Endothelial cell of umbilical vein (primary cell): ENCODE measurements at regions of chr1 and their contacts with region 1.

Region 1: GRCh38 chr1:7379445-7379971 is 391.6 kb upstream of the VAMP3 start:
- DNase-seq: peak; percentile 94
- H3K4me3 ChIP-seq: peak overlapping the region in 1 of 3 experiments; percentile 2
- H3K27ac ChIP-seq: peak overlapping the region; percentile 75
- H3K4me1 ChIP-seq: peaks cover 23% of the 10 kb centered on the region
- H3K27me3 ChIP-seq: no peaks in the 10 kb centered on the region
- CTCF ChIP-seq: no peak
- POLR2A ChIP-seq: peak; percentile 54

Region 2: GRCh38 chr1:7299329-7299799 is 80.1 kb before region 1 on chr1:
- CTCF ChIA-PET with region 1: interaction called, 3 read pairs
- POLR2A ChIA-PET with region 1: no interaction called
- dilution Hi-C with region 1: no loop called
- intact Hi-C with region 1: loop called (anchors 2 kb)
- DNase-seq: peak; percentile 93
- H3K4me3 ChIP-seq: no peak overlapping the region
- H3K27ac ChIP-seq: peak overlapping the region; percentile 90
- H3K4me1 ChIP-seq: peaks cover 17% of the 10 kb centered on the region
- H3K27me3 ChIP-seq: no peaks in the 10 kb centered on the region
- CTCF ChIP-seq: no peak
- POLR2A ChIP-seq: no peak

Region 3: DNA sequence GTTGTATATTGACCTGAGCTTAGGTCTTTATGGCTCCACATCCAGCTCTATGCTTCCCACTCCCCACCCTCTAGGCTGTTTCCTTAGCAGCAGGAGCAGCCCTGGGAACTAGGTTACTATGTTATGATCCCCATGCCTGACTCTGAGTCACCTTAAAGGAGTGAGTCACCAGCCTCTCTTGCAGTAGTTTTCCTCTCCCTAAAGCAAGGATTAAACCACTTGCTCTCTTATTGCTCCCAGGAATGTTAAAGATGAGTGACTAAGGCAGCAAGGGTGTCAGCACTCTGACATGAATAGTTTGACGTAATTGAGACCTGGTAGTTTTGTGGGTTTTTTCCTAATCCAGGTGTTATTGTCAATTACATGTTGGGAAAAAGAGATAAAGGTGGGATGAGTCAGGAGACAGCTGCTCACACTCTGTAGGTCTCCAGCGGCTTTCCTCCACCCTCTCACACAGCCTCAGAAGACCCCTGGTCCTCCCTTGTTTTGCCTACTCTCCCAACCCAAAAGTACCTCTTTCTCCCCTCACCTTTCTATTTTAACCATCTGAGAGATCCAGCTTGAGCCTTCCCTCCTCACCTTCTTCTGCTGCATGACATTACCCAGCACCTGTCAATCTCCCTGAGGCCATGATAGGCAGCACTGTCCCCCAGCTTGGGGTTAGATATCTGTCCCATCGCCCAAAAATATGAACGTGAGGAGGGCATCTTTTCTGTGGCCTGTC is 22.5 kb after region 1 on chr1:
- CTCF ChIA-PET with region 1: interaction called, 4 read pairs
- POLR2A ChIA-PET with region 1: no interaction called
- dilution Hi-C with region 1: no loop called
- intact Hi-C with region 1: loop called (anchors 1 kb)
- DNase-seq: peak; percentile 94
- H3K4me3 ChIP-seq: no peak overlapping the region
- H3K27ac ChIP-seq: peak overlapping the region; percentile 32
- H3K4me1 ChIP-seq: peaks cover 9% of the 10 kb centered on the region
- H3K27me3 ChIP-seq: peaks cover 6 to 8% of the 10 kb centered on the region in 2 experiments
- CTCF ChIP-seq: no peak
- POLR2A ChIP-seq: no peak

Region 4: GRCh38 chr1:7470880-7471638 is 91.6 kb after region 1 on chr1:
- CTCF ChIA-PET with region 1: no interaction called
- POLR2A ChIA-PET with region 1: no interaction called
- dilution Hi-C with region 1: no loop called
- intact Hi-C with region 1: loop called (anchors 1 kb)
- DNase-seq: peak; percentile 90
- H3K4me3 ChIP-seq: no peak overlapping the region
- H3K27ac ChIP-seq: peak overlapping the region; percentile 53
- H3K4me1 ChIP-seq: peaks cover 14% of the 10 kb centered on the region
- H3K27me3 ChIP-seq: no peaks in the 10 kb centered on the region
- CTCF ChIP-seq: no peak
- POLR2A ChIP-seq: no peak

Region 5: DNA sequence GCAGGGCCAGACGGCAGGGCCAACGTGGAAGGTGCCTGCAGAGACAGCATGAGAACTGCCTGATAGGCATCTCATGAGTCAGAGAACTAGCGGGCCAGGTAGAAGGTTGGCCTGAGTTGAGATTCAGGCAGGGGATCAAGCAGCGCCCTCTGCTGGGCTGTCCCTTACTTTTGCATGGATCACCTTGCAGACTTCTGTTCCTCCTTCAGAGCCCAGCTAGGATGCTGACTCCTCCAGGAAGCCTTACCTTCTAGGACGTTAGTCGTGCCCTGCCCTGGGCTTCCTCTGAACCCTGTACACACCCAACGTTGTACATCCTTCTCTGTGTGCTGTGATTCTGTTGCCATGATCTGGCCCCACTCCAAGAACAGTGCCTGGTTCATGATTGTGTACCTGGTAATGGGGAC is 160.3 kb after region 1 on chr1:
- CTCF ChIA-PET with region 1: no interaction called
- POLR2A ChIA-PET with region 1: no interaction called
- dilution Hi-C with region 1: no loop called
- intact Hi-C with region 1: loop called (anchors 5 kb)
- DNase-seq: peak; percentile 34
- H3K4me3 ChIP-seq: no peak overlapping the region
- H3K27ac ChIP-seq: no peak overlapping the region
- H3K4me1 ChIP-seq: no peaks in the 10 kb centered on the region
- H3K27me3 ChIP-seq: no peaks in the 10 kb centered on the region
- CTCF ChIP-seq: peak; percentile 48 to 62
- POLR2A ChIP-seq: no peak